HAP-1 (cell line): ENCODE measurements at regions of chr16 and their contacts with region 1.

Region 1: GRCh38 chr16:5228369-5228768 is 130.8 kb upstream of the EEF2KMT start:
- DNase-seq: no peak
- H3K4me3 ChIP-seq: no peak overlapping the region
- H3K4me1 ChIP-seq: no peaks in the 10 kb centered on the region
- H3K27me3 ChIP-seq: no peaks in the 10 kb centered on the region

Region 2: GRCh38 chr16:5615868-5616642 is 387.7 kb after region 1 on chr16:
- in situ Hi-C with region 1: loop called (anchors 25 kb)
- DNase-seq: peak; percentile 4 to 65
- H3K4me3 ChIP-seq: no peak overlapping the region
- H3K4me1 ChIP-seq: no peaks in the 10 kb centered on the region
- H3K27me3 ChIP-seq: no peaks in the 10 kb centered on the region

Region 3: GRCh38 chr16:6643080-6643686 is 1414.8 kb after region 1 on chr16:
- in situ Hi-C with region 1: loop called (anchors 25 kb)
- DNase-seq: peak; percentile 22 to 51
- H3K4me3 ChIP-seq: no peak overlapping the region
- H3K4me1 ChIP-seq: no peaks in the 10 kb centered on the region
- H3K27me3 ChIP-seq: no peaks in the 10 kb centered on the region